Right ventricle myocardium inferior (tissue), 1 donor: ENCODE measurements at regions of chr4 and their contacts with region 1.

Region 1: GRCh38 chr4:183471946-183472708 is 27.7 kb downstream of the CDKN2AIP start:
- DNase-seq: peak; percentile 91
- ATAC-seq: peak; percentile 82

Region 2: GRCh38 chr4:183444214-183445066 is 27.7 kb before region 1 on chr4 and contains the start of gene CDKN2AIP:
- intact Hi-C with region 1: no loop called
- DNase-seq: peak; percentile 98
- ATAC-seq: peak; percentile 96
- total RNA-seq, gene CDKN2AIP: 10.6 TPM

Region 3: GRCh38 chr4:183602557-183603027 is 130.5 kb after region 1 on chr4:
- intact Hi-C with region 1: loop called (anchors 1 kb)
- DNase-seq: no peak
- ATAC-seq: no peak

Region 4: DNA sequence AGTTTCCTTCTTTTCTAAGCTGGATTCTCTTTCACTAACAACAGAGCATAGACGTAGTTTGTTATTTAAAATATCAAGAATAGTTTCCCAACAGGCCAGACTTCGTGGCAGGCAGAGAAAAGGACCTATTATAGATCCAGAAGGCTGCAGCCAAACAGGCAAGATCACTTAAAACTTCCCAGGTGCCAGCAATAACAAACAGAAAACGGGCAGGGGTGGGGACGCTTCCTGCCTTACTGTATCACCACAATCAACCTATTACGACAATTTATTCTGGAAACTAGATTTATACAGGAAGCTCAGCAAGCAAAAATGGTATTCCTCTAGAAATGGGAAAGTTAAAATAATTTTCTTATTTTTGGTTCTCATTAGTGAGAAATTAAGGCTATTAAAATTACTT is 164.8 kb after region 1 on chr4:
- intact Hi-C with region 1: no loop called
- DNase-seq: no peak
- ATAC-seq: no peak

Region 5: DNA sequence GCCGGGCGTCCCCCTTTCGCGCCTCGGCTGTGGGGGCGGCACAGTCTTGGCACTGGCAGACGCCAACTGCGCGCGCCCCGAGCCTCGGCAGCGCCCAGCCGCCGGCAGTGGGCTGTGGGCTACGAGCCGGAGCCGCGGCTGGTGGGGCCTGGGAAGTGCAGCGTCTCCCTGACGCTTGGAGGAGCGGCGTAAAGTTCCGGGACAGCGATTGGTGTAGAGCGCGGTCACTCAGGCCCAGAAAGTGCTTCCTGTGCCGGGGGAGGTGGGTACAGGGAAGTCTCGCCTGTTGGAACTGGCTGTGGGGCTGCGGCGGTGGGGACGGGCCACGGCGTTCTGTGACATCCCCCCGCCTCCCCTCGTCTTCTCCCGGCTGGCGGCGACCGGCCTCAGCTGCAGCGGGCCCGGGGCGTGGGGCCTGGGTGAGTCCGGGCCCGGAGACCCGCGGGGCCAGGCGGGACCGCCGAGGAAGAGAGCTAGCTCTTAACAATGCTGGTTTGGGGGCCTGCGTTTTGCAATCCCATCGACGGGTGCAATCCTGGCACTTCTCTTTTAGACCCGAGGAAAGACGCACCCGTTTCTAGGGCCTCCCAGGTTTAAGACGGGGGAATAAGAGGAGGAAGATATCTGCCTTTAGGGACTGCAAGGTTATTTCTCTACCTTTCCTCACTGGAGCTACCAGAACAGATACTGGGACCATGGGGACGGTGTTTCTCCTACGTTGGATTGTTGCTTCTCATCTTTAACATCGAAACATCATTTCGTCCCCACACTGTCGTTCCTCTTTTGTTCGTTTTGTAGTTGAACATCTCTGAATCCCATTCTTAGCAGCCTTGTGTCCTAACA is 187.1 kb after region 1 on chr4 and contains the starts of genes RWDD4 and TRAPPC11:
- intact Hi-C with region 1: loop called (anchors 2 kb)
- DNase-seq: peak; percentile 98
- ATAC-seq: peak; percentile 100
- total RNA-seq, gene RWDD4: 15.5 TPM
- total RNA-seq, gene TRAPPC11: 17.8 TPM

Region 6: DNA sequence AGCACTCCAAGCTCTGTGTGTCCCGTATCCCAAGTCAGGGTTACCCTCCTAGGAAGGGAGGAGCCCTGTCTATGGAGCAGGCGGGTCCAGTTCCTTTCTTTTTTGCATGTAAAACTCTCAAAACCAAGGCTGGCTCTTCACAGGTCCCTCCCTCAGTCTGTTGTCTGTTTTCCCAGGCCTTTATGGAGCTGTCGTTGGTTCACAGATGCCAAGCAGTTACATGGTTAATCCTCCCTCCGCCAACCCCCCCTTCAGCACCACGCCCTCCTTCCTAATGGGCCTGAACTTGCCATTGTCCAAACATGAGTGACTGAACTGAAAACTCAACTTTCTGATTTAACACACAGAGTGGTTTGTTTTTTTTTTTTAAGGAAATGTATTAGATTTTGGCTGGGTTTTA is 581.3 kb after region 1 on chr4:
- intact Hi-C with region 1: no loop called
- DNase-seq: no peak
- ATAC-seq: no peak

Region 7: GRCh38 chr4:184168406-184169019 is 696.4 kb after region 1 on chr4:
- intact Hi-C with region 1: loop called (anchors 5 kb)
- DNase-seq: peak; percentile 91
- ATAC-seq: peak; percentile 96